Activated CD4-positive, alpha-beta memory T cell treated with anti-CD3 and anti-CD28 coated beads, Interleukin-2, amount 10 ng/mL, durations not matched to agents 7 days and 5 days (primary cell): ENCODE measurements at regions of chr1 and their contacts with region 1.

Region 1: DNA sequence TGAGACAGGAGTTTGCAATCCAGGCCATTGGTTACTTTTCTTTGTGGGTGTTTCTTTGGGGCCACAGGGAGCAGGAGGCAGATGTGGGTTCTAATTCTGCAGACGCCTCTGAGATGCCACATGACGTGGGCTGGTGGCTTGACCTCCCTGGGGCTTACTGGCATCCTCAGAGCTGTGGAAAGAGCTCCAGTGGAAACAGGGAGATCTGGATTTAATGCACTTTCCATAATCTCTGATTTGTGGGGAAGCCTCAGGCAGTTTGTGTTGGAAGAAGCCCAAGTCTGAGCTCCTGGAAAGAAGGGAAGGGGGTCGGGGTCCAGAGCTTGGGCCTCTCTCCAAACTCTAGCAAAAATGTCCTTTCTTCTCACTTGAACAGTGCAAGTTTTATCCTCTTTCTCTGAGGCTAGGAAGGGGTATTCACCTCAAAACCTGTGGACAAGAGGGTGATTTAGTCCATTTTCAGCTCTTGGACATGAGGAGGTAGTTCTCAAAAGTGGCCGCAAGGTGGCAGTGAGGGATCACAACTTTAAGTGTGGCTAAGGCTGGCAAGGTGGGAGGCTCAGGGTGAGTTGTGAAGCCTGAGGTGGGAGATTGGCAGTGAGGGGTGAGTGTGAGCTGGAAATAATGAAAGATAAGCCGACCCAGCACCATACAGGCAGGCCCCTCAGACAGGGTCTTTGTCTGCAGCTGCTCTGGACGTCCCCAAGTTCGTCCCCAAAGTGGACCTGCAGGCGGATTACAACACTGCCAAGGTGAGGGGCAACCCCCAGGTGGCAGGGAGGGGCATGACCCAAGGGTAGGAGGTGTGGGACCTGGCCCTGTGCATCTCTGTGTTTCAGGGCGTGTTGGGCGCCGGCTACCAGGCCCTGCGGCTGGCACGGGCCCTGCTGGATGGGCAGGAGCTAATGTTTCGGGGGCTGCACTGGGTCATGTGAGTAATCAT is 9.2 kb downstream of the IKBKE start:
- DNase-seq: peak; percentile 73
- H3K4me3 Mint-ChIP-seq: no peak overlapping the region
- H3K27ac Mint-ChIP-seq: peak overlapping the region; percentile 56
- H3K4me1 Mint-ChIP-seq: peaks cover 10% of the 10 kb centered on the region
- H3K27me3 Mint-ChIP-seq: no peaks in the 10 kb centered on the region

Region 2: DNA sequence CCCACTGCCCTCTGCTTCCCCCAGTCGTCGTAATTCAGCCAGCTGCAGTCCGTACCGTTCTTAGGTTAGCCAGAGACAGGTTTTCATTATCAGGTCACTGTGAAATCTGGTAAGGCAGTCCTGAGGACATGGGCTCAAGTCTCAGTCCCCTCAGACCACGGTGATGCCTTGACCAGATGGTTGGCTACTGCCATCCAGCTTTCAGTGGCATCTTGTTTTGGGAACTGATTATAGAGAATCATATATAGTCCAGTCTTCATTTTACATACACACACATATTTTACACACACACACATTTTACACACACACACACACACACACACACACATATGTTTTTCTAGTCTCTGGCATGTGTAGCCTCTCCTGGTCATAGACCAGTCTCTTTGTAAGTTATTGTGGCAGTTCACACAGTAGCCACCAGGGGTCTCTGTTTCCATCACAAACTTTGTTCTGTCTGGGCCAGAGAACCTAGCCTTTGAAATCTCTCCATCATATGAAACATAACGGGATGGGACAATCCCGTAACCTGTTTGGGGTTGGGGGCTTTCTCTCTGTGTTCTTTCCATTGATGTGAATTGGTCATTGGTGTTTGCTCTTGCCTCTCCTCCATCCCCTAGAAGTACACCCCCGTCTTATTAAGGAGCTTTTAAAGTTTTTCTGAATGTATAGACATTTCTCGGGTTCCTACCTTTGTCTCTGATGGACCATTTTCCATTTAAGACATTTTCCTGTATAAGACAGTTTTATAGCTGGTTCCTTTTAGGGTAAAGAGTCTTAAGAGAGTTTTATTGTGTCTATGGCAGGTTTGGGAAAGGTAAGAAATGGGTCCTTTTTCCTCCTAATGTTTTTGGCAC is 17.6 kb before region 1 on chr1:
- CTCF ChIA-PET with region 1: interaction called, 14 read pairs
- POLR2A ChIA-PET with region 1: interaction called, 10 read pairs
- DNase-seq: peak; percentile 79
- H3K4me3 Mint-ChIP-seq: no peak overlapping the region
- H3K27ac Mint-ChIP-seq: no peak overlapping the region
- H3K4me1 Mint-ChIP-seq: peaks cover 49% of the 10 kb centered on the region
- H3K27me3 Mint-ChIP-seq: no peaks in the 10 kb centered on the region

Region 3: DNA sequence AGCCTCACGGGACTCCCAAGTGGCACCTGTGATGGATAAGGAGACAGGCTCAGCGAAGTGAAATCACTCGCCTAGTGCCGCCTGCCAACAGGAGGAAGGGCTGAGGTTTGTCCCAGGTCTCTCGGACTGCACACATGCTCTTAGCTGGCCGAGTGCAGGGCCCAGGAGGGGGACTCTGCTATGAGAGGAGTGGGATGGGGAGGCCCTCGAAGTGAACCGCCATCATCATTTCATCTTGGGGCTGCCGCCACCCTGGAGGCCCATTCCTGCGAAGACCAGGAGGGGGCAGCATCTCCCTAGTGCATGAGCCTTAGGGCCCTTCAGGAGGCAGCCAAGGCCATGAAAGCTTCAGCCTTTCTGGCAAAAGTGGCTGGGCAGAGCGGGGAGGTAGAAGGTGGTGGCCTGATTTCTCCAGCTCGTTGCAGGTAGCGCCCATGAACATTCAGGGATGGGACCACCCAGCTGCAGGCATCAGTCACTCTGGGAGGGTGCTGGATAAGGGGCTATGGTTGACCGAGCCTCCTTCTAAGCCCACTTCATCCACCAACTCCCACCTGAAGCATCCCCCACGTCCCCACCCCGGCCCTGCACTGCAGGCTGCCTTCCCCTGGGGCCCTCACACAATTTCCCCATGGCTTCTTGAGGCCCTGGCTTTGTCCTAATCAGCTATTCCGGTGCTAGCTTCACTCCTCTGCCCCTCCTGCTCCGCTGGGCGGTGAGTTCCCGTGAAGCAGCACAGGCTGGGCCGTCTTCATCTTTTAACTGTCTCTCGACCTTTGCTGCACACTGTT is 10.7 kb after region 1 on chr1:
- CTCF ChIA-PET with region 1: interaction called, 21 read pairs
- POLR2A ChIA-PET with region 1: no interaction called
- DNase-seq: peak; percentile 74
- H3K4me3 Mint-ChIP-seq: no peak overlapping the region
- H3K27ac Mint-ChIP-seq: peak overlapping the region; percentile 44
- H3K4me1 Mint-ChIP-seq: peaks cover 11% of the 10 kb centered on the region
- H3K27me3 Mint-ChIP-seq: no peaks in the 10 kb centered on the region

Region 4: GRCh38 chr1:206556750-206557635 is 77.5 kb after region 1 on chr1:
- CTCF ChIA-PET with region 1: interaction called, 12 read pairs
- POLR2A ChIA-PET with region 1: interaction called, 3 read pairs
- DNase-seq: peak; percentile 94
- H3K4me3 Mint-ChIP-seq: peak overlapping the region; percentile 92
- H3K27ac Mint-ChIP-seq: peak overlapping the region; percentile 94
- H3K4me1 Mint-ChIP-seq: peaks cover 68% of the 10 kb centered on the region
- H3K27me3 Mint-ChIP-seq: no peaks in the 10 kb centered on the region